CD8-positive, alpha-beta memory T cell (primary cell): ENCODE measurements at regions of chr1 and their contacts with region 1.

Region 1: DNA sequence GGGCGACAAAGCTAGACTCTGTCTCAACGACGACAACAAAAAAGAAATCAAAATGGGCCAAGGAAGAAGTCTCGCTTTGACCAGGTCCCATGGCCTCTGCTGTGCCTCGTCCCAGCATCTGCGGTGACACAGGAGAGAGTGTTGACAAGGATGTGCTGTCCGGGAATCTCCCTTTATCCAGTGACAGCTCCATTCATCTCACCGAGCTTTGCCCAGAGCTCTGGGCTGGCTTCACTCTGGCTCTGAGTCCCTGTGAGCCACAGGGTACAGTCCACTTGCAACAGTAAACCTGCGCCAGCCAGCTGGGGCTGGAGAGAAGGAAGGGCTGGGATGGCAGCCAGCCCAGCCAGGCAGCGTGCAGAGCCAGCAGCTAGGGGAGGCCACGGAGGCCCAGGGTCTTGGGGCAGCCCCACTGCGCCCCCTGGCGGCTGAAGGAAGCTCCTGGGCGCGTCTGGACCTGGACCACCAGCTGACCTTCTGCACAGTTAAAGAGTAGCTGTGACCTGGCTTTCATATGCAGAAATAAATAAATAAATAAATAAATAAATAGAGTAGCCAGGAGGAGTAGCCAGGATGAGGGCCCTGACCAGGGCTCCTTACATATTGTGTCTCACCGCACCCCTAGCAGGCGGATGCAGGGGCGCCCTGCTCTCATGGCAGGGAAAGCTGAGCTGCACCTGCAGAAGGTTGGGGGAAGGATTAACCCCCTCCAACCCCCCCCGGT is 29.7 kb downstream of the ENO1 start:
- DNase-seq: peak; percentile 56 to 80 (median 64)
- H3K4me3 ChIP-seq: no peak overlapping the region
- H3K4me3 Mint-ChIP-seq: peak overlapping the region in 1 of 7 donors; percentile 6
- H3K27ac ChIP-seq: no peak overlapping the region
- H3K27ac Mint-ChIP-seq: no peak overlapping the region
- H3K4me1 ChIP-seq: no peaks in the 10 kb centered on the region
- H3K4me1 Mint-ChIP-seq: peaks cover 0 to 3% (median 0%) of the 10 kb centered on the region in 3 donors
- H3K27me3 ChIP-seq: no peaks in the 10 kb centered on the region
- H3K27me3 Mint-ChIP-seq: no peaks in the 10 kb centered on the region

Region 2: DNA sequence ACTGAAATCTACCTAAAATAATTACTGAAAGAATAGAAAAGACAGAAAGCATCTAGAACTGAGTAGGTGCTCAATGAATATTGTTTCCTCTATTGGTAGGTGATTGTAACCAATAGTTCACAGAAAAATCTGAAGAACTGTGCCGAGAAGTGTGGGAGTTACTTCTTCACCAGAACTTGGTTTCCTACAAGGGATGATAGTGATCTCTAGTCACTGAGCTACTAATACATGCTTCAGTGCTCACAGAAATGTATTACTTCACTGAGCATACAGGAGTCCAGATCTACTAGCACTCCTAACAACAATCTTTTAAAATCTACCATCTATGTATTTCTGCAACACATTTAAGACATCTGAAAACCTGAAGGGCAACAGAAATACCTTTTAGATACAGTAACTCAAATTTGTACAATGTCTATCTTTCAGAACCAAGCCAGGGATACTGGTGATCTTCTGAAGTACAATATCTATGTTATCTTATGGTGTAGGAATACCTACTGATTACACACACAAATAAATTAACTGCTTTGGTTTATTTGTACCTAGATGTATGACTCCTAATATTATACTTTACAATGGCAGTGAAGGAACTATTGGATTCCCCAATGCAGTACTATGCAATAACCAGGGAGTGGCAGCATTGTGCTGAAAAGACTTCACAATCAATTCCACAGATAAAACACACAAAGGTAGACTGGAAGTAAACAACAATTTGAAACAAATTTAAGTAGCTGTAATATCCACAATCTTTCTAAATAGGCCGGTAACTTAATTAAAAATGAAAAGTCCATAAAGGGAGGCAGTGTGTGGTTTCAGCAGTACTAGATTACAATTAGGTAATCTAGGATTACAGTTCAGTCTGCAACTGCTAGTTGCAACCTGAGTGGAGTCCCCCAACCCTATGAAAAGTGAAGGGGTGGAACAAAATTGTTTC is 287.9 kb before region 1 on chr1:
- CTCF ChIA-PET with region 1: interaction called, 68 read pairs
- POLR2A ChIA-PET with region 1: no interaction called
- DNase-seq: peak in 4 of 5 donors; percentile 13 to 53 (median 38)
- H3K4me3 ChIP-seq: no peak overlapping the region
- H3K4me3 Mint-ChIP-seq: no peak overlapping the region
- H3K27ac ChIP-seq: no peak overlapping the region
- H3K27ac Mint-ChIP-seq: no peak overlapping the region
- H3K4me1 ChIP-seq: no peaks in the 10 kb centered on the region
- H3K4me1 Mint-ChIP-seq: peaks cover 2 to 6% (median 4%) of the 10 kb centered on the region in 3 donors
- H3K27me3 ChIP-seq: no peaks in the 10 kb centered on the region
- H3K27me3 Mint-ChIP-seq: no peaks in the 10 kb centered on the region

Region 3: DNA sequence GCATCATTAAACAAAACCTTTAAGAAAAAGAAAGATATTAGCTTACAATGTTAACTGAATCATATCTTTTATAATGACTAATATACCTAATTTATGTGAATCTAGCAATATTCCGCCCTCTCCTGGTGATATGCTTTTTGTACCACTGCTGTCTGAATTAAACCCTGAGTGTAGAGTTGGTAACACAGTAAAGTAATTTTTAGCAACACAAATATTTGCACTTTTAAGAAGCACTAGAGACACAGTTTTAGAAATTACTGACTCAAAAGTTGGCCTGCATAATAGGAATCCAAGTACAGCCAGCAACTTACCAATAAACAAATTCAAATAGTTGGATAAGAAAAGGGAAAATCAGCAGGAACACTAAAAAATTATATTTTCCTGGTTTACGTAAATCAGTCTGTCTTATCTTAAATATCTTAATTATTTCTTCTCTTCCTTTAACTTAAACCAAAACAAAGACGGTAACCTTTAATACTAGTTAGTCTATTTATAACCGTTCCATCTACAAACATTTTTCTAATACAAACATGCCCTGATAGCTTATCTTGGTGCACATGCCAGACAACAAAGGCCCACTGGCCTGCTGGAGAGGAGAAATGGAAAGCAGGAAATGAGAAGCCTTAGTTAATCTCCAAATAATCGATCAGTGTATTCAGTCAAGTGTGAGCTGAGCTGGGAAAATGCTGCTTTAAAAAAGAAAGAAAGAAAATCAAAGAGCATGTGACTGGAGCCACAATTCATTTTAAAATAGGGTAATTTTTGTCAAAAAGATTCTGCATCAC is 277.4 kb before region 1 on chr1:
- CTCF ChIA-PET with region 1: interaction called, 68 read pairs
- POLR2A ChIA-PET with region 1: no interaction called
- DNase-seq: no peak
- H3K4me3 ChIP-seq: no peak overlapping the region
- H3K4me3 Mint-ChIP-seq: no peak overlapping the region
- H3K27ac ChIP-seq: no peak overlapping the region
- H3K27ac Mint-ChIP-seq: no peak overlapping the region
- H3K4me1 ChIP-seq: no peaks in the 10 kb centered on the region
- H3K4me1 Mint-ChIP-seq: peaks cover 0 to 2% (median 0%) of the 10 kb centered on the region in 3 donors
- H3K27me3 ChIP-seq: no peaks in the 10 kb centered on the region
- H3K27me3 Mint-ChIP-seq: no peaks in the 10 kb centered on the region

Region 4: GRCh38 chr1:8727809-8728213 is 121.0 kb before region 1 on chr1:
- CTCF ChIA-PET with region 1: interaction called, 19 read pairs
- POLR2A ChIA-PET with region 1: no interaction called
- DNase-seq: no peak
- H3K4me3 ChIP-seq: no peak overlapping the region
- H3K4me3 Mint-ChIP-seq: no peak overlapping the region
- H3K27ac ChIP-seq: no peak overlapping the region
- H3K27ac Mint-ChIP-seq: peak overlapping the region in 3 of 8 donors; percentile 12 to 42 (median 21)
- H3K4me1 ChIP-seq: no peaks in the 10 kb centered on the region
- H3K4me1 Mint-ChIP-seq: peaks cover 3 to 8% (median 4%) of the 10 kb centered on the region in 3 donors
- H3K27me3 ChIP-seq: no peaks in the 10 kb centered on the region
- H3K27me3 Mint-ChIP-seq: no peaks in the 10 kb centered on the region

Region 5: DNA sequence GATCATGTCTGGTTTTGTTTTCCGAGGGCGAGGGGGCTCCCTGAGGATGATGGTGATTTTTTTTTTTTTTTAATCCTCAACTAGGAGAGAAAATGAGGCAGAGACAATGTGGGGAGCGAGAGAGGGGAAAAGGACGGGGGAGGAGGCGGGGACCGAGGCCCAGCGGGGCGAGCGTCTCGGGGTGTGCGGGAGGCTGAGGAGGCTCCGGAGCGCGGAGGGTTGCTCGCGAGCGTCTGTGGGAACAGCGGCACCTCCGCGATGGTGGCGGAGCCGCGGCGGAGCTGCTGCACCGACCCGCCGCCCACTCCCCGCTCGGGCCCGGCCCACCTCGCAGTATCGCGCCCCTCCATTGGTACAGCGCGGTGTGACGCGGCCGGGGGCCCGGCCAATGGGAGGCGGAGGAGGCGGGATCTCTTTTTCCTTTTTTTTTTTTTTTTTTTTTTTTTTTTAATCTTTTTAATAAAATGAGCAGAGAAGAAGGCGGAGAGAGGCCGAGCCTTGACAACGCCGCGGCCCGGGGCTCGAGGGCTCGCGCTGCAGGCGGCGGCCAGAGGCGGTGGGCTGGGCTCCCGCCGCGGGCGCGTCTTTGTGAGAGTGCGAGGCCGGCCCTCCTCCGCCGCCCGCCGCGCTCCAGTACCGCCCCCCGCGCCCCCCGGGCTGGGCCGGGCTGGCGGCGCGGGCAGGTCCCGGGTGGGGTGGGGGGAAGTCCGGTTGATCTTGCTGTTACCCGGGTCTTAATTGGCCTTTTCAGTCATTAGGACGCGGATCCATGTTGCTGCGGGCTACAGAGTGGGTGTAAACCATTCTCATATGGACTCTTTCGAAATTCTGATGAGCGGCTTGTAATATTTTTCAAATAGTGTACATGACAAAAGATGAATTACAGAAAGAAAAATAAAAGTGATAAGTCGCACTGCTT is 31.2 kb before region 1 on chr1 and contains the start of gene RERE:
- CTCF ChIA-PET with region 1: interaction called, 10 read pairs
- POLR2A ChIA-PET with region 1: no interaction called
- DNase-seq: peak; percentile 94 to 98 (median 97)
- H3K4me3 ChIP-seq: peak within 1 kb of the TSS; percentile 80
- H3K4me3 Mint-ChIP-seq: peak within 1 kb of the TSS; percentile 86 to 98 (median 91)
- H3K27ac ChIP-seq: peak within 1 kb of the TSS; percentile 93
- H3K27ac Mint-ChIP-seq: peak within 1 kb of the TSS; percentile 89 to 100 (median 97)
- H3K4me1 ChIP-seq: peaks cover 24% of the 10 kb centered on the region
- H3K4me1 Mint-ChIP-seq: peaks cover 37 to 46% (median 46%) of the 10 kb centered on the region in 3 donors
- H3K27me3 ChIP-seq: no peaks in the 10 kb centered on the region
- H3K27me3 Mint-ChIP-seq: peaks cover 6 to 13% of the 10 kb centered on the region in 2 donors
- total RNA-seq, gene RERE: 37.9 to 39.2 TPM

Region 6: DNA sequence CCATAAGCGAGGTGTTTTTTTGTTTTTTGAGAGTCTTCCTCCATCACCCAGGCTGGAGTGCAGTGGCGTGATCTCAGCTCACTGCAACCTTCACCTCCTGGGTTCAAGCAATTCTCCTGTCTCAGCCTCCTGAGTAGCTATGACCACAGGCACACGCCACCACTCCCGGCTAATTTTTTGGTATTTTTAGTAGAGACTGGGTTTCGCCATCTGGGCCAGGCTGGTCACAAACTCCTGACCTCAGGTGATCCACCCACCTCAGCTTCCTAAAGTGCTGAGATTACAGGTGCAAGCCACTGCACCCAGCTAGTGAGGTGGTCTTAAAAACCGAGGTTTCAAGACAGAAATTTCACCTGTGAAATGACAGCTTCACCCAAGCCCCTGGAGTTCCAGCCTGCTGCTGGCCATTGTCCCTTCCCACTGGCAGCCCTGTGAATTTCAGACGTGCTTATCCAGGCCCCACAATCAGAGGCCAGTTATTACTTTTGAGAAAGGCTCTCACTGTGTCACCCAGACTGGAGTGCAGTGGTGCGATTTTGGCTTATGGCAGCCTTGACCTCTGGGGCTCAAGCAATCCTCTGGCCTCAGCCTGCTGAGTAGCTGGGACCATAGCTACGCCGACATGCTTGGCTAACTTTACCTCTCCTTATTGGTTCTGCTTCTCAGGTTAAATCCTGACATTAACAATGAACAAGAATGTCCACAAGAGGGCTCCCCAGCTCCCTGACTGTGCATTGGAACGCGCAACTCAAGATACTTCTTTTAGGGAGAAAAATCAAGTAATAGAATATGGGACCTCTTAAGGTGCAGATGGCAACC is 10.3 kb after region 1 on chr1:
- CTCF ChIA-PET with region 1: interaction called, 82 read pairs
- POLR2A ChIA-PET with region 1: no interaction called
- DNase-seq: peak in 4 of 5 donors; percentile 20 to 62 (median 48)
- H3K4me3 ChIP-seq: no peak overlapping the region
- H3K4me3 Mint-ChIP-seq: peak overlapping the region in 1 of 7 donors; percentile 18
- H3K27ac ChIP-seq: no peak overlapping the region
- H3K27ac Mint-ChIP-seq: peak overlapping the region in 7 of 8 donors; percentile 13 to 94 (median 77)
- H3K4me1 ChIP-seq: no peaks in the 10 kb centered on the region
- H3K4me1 Mint-ChIP-seq: peaks cover 10 to 25% (median 17%) of the 10 kb centered on the region in 3 donors
- H3K27me3 ChIP-seq: no peaks in the 10 kb centered on the region
- H3K27me3 Mint-ChIP-seq: peaks cover 0 to 2% of the 10 kb centered on the region in 2 donors